Left cardiac atrium (tissue), 4 donors: ENCODE measurements at regions of chr3 and their contacts with region 1.

Region 1: GRCh38 chr3:14261229-14261628 is 82.6 kb downstream of the LSM3 start:
- DNase-seq: peak; percentile 84
- ATAC-seq: peak; percentile 86 to 88

Region 2: DNA sequence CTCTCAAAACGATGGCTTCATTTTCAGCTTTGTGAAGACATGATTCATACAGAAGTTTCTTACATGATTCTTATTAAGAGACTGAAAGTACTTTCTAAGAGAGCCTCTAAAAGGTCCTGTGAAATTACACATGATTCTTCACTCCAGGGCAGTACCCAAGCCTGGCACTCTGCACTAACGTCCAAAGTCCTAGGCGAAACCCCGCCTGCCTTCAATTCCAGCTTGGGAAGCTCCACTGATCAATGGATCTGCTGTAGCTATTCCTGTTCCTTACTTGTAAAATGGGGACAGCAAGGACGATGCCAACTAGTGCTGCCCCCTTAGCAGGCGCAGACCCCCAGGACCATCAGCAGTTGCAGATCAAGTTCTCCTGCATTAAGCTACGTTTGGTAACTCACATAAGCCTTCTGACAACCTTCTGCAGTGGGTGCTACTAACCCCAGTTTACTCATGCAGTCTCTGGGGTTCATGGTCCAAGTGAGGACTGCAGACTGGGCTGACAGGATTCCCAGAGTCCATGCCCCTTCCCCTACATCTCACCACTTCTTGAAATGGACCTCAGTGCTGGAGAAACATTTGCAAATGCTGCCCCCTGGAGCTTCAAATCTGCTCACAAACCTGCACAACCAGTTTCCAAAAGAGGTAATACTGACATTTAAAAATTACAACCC is 147.1 kb before region 1 on chr3:
- intact Hi-C with region 1: no loop called
- DNase-seq: no peak
- ATAC-seq: no peak

Region 3: DNA sequence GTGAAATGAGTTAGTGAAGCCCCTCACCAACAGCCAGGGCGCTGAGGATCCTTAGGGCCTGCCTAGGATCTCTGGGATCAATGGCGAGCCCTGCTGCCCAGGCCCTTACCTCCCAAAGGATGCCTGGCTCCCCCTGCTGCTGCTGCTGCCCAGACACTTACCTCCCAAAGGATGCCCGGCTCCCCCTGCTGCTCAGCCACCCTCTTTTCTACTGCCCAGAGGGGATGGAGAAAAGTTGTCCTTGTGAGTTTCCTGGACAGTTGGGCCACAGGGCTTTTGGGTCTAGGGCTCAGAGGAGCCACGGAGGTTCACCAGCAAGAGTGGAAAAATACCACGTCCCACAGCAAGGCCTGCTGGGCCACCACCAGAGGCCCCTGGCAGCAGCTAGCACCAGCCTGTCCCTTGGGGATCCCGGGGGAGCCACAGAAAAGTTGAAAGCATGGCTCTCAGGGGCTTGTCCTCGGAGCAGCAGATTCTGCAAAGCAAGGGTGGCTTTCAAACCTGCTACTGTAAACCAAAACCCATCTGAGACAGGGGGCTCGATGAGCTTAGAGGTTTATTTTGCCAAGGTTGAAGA is 200.6 kb after region 1 on chr3:
- intact Hi-C with region 1: loop called (anchors 2 to 5 kb)
- DNase-seq: no peak
- ATAC-seq: peak; percentile 6 to 31

Region 4: DNA sequence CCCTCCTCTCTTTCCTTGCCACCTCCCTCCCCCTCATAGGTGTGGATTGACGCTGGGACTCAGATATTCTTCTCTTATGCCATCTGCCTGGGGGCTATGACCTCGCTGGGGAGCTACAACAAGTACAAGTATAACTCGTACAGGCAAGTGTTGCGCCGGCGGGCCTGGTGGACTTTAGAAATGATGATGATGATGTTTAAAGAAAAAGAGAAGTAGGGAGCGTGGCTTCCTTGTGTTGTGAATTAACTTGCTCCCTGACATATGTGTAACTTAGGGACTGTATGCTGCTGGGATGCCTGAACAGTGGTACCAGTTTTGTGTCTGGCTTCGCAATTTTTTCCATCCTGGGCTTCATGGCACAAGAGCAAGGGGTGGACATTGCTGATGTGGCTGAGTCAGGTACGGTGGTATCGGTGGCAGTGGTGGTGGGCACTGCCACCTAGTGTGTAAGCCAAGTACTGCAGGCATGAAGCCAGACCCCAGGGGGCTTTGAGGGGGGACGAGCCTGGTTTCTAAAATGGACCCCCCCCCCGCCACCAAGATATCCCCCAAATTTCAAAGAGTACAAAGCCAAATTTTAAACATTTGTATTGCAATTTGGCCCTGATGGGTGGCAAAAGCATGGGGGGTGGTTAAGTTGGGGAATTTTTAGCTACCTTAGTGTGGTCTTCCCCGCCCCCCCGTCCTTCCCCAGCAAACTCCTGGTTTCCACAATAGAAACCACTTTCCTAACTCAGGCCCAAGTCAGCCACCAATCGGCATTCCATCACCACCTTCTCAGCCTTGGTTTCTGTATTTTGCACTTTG is 206.8 kb after region 1 on chr3:
- intact Hi-C with region 1: loop called (anchors 2 to 5 kb)
- DNase-seq: no peak
- ATAC-seq: peak; percentile 46 to 58